ENCODE measurements at regions of chr1 and their contacts with region 1.

Region 1: DNA sequence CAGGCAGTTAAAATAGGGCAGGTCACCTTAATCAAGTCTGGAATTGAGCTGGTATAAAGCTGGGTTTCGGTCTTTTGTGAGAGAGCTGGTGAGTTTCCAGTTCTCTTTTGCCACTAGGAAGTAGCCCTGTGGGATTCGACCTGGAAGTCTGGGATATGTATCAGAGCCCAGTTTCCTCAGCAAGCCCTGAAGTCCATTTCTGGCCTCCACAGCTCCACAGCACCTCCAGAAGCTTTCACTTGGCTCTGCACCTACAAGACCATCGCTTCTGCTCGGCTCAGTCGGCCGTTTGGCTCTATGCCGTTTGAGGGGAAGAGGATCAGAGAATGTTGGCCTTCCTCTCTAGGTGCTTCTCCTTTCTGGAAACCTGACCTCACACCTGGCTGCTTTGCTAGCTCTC is 148.0 kb downstream of the GALNT2 start:
- DNase-seq: peak; percentile 53 to 75
- ATAC-seq: peak; percentile 78 to 94 (median 90)
- H3K4me3 ChIP-seq: peak overlapping the region in 2 of 10 donors; percentile 6 to 18
- H3K27ac ChIP-seq: peak overlapping the region in 9 of 10 donors; percentile 1 to 77 (median 50)
- H3K4me1 ChIP-seq: peaks cover 7 to 59% (median 36%) of the 10 kb centered on the region in 9 donors
- H3K27me3 ChIP-seq: no peaks in the 10 kb centered on the region
- CTCF ChIP-seq: peak; percentile 45 to 88 (median 74)

Region 2: GRCh38 chr1:229558571-229559335 is 656.3 kb before region 1 on chr1 and contains the start of gene ABCB10:
- intact Hi-C with region 1: loop called in 1 of 10 experiments (anchors 10 kb)
- DNase-seq: peak; percentile 96
- ATAC-seq: peak; percentile 93 to 97 (median 96)
- H3K4me3 ChIP-seq: peak within 1 kb of the TSS; percentile 76 to 96 (median 83)
- H3K27ac ChIP-seq: peak within 1 kb of the TSS; percentile 73 to 99 (median 92)
- H3K4me1 ChIP-seq: peaks cover 0 to 51% (median 38%) of the 10 kb centered on the region in 9 donors
- H3K27me3 ChIP-seq: no peaks in the 10 kb centered on the region
- CTCF ChIP-seq: peak; percentile 45 to 93 (median 85)
- total RNA-seq, gene ABCB10: 8.9 to 13.5 (median 11.9) TPM

Region 3: GRCh38 chr1:229856009-229856650 is 358.9 kb before region 1 on chr1:
- intact Hi-C with region 1: loop called in 1 of 10 experiments (anchors 10 kb)
- DNase-seq: no peak
- ATAC-seq: peak in 3 of 8 donors; percentile 36 to 56 (median 52)
- H3K4me3 ChIP-seq: peak overlapping the region in 3 of 10 donors; percentile 11 to 27 (median 12)
- H3K27ac ChIP-seq: no peak overlapping the region
- H3K4me1 ChIP-seq: peaks cover 0 to 9% (median 3%) of the 10 kb centered on the region in 9 donors
- H3K27me3 ChIP-seq: no peaks in the 10 kb centered on the region
- CTCF ChIP-seq: no peak

Region 4: GRCh38 chr1:230073371-230074035 is 141.5 kb before region 1 on chr1:
- intact Hi-C with region 1: loop called in 4 of 10 experiments (anchors 5 to 10 kb)
- DNase-seq: no peak
- ATAC-seq: peak in 5 of 8 donors; percentile 12 to 42 (median 34)
- H3K4me3 ChIP-seq: no peak overlapping the region
- H3K27ac ChIP-seq: no peak overlapping the region
- H3K4me1 ChIP-seq: peaks cover 4 to 66% (median 39%) of the 10 kb centered on the region in 9 donors
- H3K27me3 ChIP-seq: no peaks in the 10 kb centered on the region
- CTCF ChIP-seq: no peak

Region 5: DNA sequence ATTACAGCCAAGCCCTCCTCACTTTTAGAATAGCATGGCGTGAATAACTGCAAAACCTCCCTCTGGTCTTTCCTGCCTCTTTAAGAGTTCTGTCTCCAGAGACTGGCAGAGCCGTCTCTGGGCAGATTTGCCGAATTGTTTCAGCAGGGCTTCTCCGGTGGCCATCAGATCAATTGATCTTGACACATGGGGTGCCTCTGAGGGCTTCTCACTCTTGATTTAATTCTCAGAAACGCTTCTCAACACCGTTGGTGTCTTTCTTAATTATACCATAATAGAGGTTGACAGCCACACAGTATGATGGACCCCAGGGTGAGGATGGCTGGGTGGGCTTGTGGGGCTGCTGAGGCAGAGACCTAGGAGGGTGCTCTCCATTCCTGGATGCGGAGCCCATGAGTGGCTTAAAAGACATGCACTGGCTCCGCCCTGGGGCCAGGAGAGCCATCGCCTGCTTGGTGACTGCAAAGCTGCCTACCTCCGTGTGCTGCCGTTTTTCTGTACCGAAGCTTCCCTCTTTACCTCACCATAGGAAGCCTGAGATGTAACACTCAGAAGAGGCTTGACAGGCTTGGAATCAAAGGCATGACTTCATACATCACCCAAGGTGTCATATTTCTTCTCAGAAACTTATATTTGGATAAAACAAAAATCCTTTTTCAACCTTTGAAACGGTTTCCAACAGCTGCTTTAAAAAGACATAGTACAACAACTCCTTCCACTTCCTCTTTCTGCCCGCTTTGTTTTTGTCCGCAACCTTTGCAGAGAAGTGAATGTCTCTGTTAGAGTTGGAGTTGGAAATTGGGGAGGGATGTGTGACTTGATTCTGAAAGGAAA is 65.1 kb before region 1 on chr1:
- intact Hi-C with region 1: loop called in 1 of 10 experiments (anchors 10 kb)
- DNase-seq: no peak
- ATAC-seq: no peak
- H3K4me3 ChIP-seq: peak overlapping the region in 1 of 10 donors; percentile 24
- H3K27ac ChIP-seq: peak overlapping the region in 1 of 10 donors; percentile 70
- H3K4me1 ChIP-seq: peaks cover 8 to 75% (median 58%) of the 10 kb centered on the region in 9 donors
- H3K27me3 ChIP-seq: no peaks in the 10 kb centered on the region
- CTCF ChIP-seq: no peak

Measured in heart right ventricle (tissue), 16 donors.